Sigmoid colon (tissue), 7 donors: ENCODE measurements at regions of chr10 and their contacts with region 1.

Region 1: GRCh38 chr10:59880971-59881510 is 25.3 kb downstream of the CCDC6 start:
- DNase-seq: no peak
- H3K4me3 ChIP-seq: no peak overlapping the region
- H3K27ac ChIP-seq: no peak overlapping the region
- H3K4me1 ChIP-seq: peaks cover 0 to 77% (median 62%) of the 10 kb centered on the region in 4 donors
- H3K27me3 ChIP-seq: no peaks in the 10 kb centered on the region
- CTCF ChIP-seq: no peak
- EP300 ChIP-seq: no peak
- POLR2A ChIP-seq: no peak

Region 2: GRCh38 chr10:59894114-59894513 is 13.1 kb after region 1 on chr10:
- intact Hi-C with region 1: loop called (anchors 2 kb)
- DNase-seq: peak; percentile 81
- H3K4me3 ChIP-seq: no peak overlapping the region
- H3K27ac ChIP-seq: peak overlapping the region; percentile 74 to 93 (median 84)
- H3K4me1 ChIP-seq: peaks cover 0 to 98% (median 96%) of the 10 kb centered on the region in 4 donors
- H3K27me3 ChIP-seq: no peaks in the 10 kb centered on the region
- CTCF ChIP-seq: no peak
- EP300 ChIP-seq: no peak
- POLR2A ChIP-seq: no peak